ENCODE measurements at regions of chr12 and their contacts with region 1.

Region 1: GRCh38 chr12:119780786-119781434 is 96.2 kb downstream of the CIT start:
- DNase-seq: peak; percentile 38
- ATAC-seq: no peak

Region 2: GRCh38 chr12:119642986-119643385 is 137.9 kb before region 1 on chr12:
- intact Hi-C with region 1: no loop called
- DNase-seq: no peak
- ATAC-seq: no peak

Region 3: DNA sequence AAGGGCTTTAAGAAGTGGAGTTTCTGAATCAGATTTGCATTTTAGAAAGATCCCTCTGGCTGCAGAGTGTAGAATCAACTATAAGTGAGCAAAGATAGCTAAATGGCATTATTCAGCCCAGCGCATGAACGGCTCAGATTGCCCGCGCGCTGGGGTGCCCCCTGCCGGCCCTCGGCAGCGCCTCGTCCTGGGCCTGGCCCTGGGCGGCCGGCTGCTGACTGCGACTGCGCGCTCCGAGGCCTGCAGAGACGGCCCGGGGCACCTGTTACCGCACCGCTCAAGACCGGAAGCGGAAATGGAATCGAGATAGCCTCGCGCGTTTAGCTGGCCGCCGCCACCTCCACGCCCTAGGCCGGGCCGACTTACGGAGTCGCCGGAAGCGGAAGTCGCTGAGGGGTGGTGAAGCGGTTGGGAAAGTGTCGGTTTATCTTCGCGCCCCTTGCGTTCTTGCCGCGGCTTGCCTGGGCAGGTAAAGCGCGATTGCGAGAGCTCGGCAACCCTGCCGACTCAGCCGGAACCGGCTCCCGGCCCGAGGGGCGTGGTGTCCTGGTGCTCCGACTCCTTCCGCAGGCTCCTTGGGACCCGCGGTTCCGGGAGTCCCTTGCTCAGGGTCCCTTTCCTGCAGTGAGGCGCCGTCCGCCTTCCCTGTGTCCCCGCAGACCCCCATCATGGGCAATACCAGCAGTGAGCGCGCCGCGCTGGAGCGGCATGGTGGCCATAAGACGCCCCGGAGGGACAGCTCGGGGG is 113.2 kb before region 1 on chr12 and contains the start of gene PRKAB1:
- intact Hi-C with region 1: loop called in 1 of 2 experiments (anchors 10 kb)
- DNase-seq: peak; percentile 98
- ATAC-seq: peak; percentile 99
- total RNA-seq, gene PRKAB1: 11.9 to 15.4 TPM

Region 4: DNA sequence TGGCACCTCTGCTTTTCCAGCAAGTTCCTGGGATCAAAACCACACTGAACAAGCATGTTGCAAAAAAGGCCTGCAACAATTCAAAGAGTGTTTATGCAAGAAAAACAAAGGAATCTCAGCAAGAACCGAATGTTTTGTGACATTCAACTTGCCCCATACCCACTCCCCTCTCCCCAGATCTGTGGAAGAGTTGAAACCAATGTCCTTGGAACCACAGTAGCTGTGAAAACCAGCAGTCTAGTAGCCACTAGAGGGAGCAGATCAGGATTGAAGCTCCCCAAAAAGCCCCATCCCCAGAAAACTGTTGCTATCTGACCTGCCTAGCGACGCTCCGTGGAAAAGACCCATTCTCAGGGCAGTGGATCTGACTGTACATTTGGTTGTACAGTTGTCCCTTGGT is 85.9 kb before region 1 on chr12:
- intact Hi-C with region 1: loop called in 1 of 2 experiments (anchors 10 kb)
- DNase-seq: no peak
- ATAC-seq: no peak

Measured in left cardiac atrium (tissue), 4 donors.